Naive thymus-derived CD4-positive, alpha-beta T cell (primary cell): ENCODE measurements at regions of chr11 and their contacts with region 1.

Region 1: GRCh38 chr11:68297812-68298658 is 14.4 kb upstream of the LRP5 start:
- DNase-seq: peak; percentile 42 to 84 (median 70)
- ATAC-seq: peak; percentile 98
- H3K4me3 ChIP-seq: no peak overlapping the region
- H3K4me3 Mint-ChIP-seq: no peak overlapping the region
- H3K27ac ChIP-seq: no peak overlapping the region
- H3K27ac Mint-ChIP-seq: no peak overlapping the region
- H3K4me1 ChIP-seq: no peaks in the 10 kb centered on the region
- H3K4me1 Mint-ChIP-seq: peaks cover 0 to 7% (median 0%) of the 10 kb centered on the region in 7 donors
- H3K27me3 ChIP-seq: no peaks in the 10 kb centered on the region
- H3K27me3 Mint-ChIP-seq: peaks cover 0 to 5% (median 0%) of the 10 kb centered on the region in 5 donors

Region 2: DNA sequence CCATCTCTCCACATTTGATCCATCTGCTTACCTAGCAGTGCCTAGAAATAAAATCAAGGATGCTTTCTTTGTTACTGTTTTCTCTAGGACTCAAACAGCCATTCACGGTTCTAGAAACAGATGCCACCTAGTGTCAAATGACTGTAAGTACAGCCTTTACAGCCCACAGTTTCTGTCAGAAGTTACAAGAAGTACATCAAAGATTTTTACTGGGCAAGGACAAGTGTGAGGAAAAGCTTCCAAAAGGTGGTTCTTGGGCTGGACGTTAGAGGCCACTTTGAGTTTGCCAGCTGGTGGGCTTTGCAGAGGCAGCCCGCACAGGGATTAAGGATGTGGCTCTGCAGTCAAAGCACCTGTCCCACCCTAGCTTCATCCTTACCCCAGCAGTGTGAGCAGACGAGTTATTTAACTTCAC is 91.8 kb before region 1 on chr11:
- CTCF ChIA-PET with region 1: interaction called, 3 read pairs
- POLR2A ChIA-PET with region 1: no interaction called
- intact Hi-C with region 1: loop called (anchors 1 to 5 kb)
- DNase-seq: peak in 7 of 9 donors; percentile 35 to 65 (median 55)
- ATAC-seq: peak; percentile 82
- H3K4me3 ChIP-seq: no peak overlapping the region
- H3K4me3 Mint-ChIP-seq: peak overlapping the region in 7 of 10 donors; percentile 5 to 60 (median 25)
- H3K27ac ChIP-seq: no peak overlapping the region
- H3K27ac Mint-ChIP-seq: peak overlapping the region in 5 of 9 donors; percentile 7 to 73 (median 43)
- H3K4me1 ChIP-seq: peaks cover 23 to 48% of the 10 kb centered on the region in 2 donors
- H3K4me1 Mint-ChIP-seq: peaks cover 38 to 91% (median 71%) of the 10 kb centered on the region in 7 donors
- H3K27me3 ChIP-seq: no peaks in the 10 kb centered on the region
- H3K27me3 Mint-ChIP-seq: no peaks in the 10 kb centered on the region

Region 3: DNA sequence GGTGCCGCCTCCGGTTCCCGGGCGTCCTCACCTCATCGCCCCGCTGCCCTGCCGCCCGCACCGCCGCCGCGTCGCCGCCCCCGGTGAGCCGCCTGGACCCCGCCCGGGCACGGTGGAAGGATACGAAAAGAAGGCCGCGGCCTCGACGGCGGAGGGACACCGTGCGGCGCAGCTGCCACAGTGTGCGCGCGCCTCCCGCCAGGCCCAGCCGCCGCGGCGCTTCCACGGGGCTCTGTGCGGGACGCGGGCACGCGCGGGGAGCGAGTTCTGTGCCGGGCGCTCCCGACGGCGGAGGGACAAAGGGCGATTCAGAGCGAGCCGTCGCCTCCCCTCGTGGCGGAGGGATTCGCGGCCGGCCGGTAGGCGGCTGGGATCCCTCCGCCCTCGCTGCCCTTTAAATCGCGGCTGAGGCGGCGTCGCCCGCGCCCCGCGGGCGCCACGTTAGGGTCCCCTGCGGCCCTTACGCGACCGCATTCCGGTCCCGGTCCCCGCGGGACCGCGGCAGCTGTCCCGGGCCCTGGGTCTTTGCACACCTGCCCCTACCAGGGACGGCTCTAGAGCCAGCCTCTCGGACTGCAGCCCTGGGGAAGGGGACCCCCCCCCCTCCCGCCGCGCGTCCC is 84.4 kb before region 1 on chr11:
- CTCF ChIA-PET with region 1: no interaction called
- POLR2A ChIA-PET with region 1: interaction called, 3 read pairs
- intact Hi-C with region 1: loop called (anchors 1 to 5 kb)
- DNase-seq: peak; percentile 69 to 92 (median 86)
- ATAC-seq: peak; percentile 70
- H3K4me3 ChIP-seq: peak overlapping the region; percentile 81
- H3K4me3 Mint-ChIP-seq: peak overlapping the region; percentile 69 to 98 (median 78)
- H3K27ac ChIP-seq: peak overlapping the region; percentile 88
- H3K27ac Mint-ChIP-seq: peak overlapping the region in 7 of 9 donors; percentile 35 to 99 (median 92)
- H3K4me1 ChIP-seq: peaks cover 27% of the 10 kb centered on the region in 2 donors
- H3K4me1 Mint-ChIP-seq: peaks cover 35 to 50% (median 45%) of the 10 kb centered on the region in 7 donors
- H3K27me3 ChIP-seq: no peaks in the 10 kb centered on the region
- H3K27me3 Mint-ChIP-seq: peaks cover 0 to 28% (median 0%) of the 10 kb centered on the region in 5 donors

Region 4: DNA sequence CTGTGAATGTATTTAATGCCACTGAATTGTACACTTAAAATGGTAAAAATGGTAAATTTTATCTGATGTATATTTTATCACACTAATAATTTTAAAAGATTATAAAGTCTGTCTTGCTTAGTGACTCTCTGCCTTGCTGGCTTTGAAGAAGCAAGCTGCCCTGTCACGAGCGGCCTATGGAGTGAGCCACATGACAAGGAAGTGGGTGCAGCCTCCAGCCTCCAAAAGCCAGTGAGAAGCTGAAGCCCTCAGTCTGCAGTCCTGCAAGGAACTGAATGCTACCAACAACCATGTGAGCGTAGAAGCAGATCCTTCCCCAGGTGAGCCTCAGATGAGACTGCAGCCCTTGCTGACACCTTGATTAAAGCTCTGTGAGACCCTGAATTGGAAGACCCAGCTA is 46.3 kb before region 1 on chr11:
- CTCF ChIA-PET with region 1: interaction called, 131 read pairs
- POLR2A ChIA-PET with region 1: interaction called, 11 read pairs
- intact Hi-C with region 1: no loop called
- DNase-seq: no peak
- ATAC-seq: no peak
- H3K4me3 ChIP-seq: no peak overlapping the region
- H3K4me3 Mint-ChIP-seq: no peak overlapping the region
- H3K27ac ChIP-seq: no peak overlapping the region
- H3K27ac Mint-ChIP-seq: no peak overlapping the region
- H3K4me1 ChIP-seq: no peaks in the 10 kb centered on the region
- H3K4me1 Mint-ChIP-seq: peaks cover 0 to 3% (median 0%) of the 10 kb centered on the region in 7 donors
- H3K27me3 ChIP-seq: no peaks in the 10 kb centered on the region
- H3K27me3 Mint-ChIP-seq: peaks cover 0 to 4% (median 0%) of the 10 kb centered on the region in 5 donors

Region 5: GRCh38 chr11:68257475-68258362 is 40.3 kb before region 1 on chr11:
- CTCF ChIA-PET with region 1: interaction called, 131 read pairs
- POLR2A ChIA-PET with region 1: interaction called, 11 read pairs
- intact Hi-C with region 1: loop called (anchors 1 kb)
- DNase-seq: peak; percentile 84 to 95 (median 89)
- ATAC-seq: peak; percentile 95
- H3K4me3 ChIP-seq: no peak overlapping the region
- H3K4me3 Mint-ChIP-seq: peak overlapping the region in 1 of 10 donors; percentile 34
- H3K27ac ChIP-seq: no peak overlapping the region
- H3K27ac Mint-ChIP-seq: peak overlapping the region in 3 of 9 donors; percentile 21 to 85 (median 54)
- H3K4me1 ChIP-seq: peaks cover 3 to 5% of the 10 kb centered on the region in 2 donors
- H3K4me1 Mint-ChIP-seq: peaks cover 2 to 6% (median 4%) of the 10 kb centered on the region in 7 donors
- H3K27me3 ChIP-seq: no peaks in the 10 kb centered on the region
- H3K27me3 Mint-ChIP-seq: peaks cover 0 to 2% (median 0%) of the 10 kb centered on the region in 5 donors

Region 6: GRCh38 chr11:68321293-68322041 is 23.4 kb after region 1 on chr11:
- CTCF ChIA-PET with region 1: no interaction called
- POLR2A ChIA-PET with region 1: no interaction called
- intact Hi-C with region 1: no loop called
- DNase-seq: no peak
- ATAC-seq: no peak
- H3K4me3 ChIP-seq: no peak overlapping the region
- H3K4me3 Mint-ChIP-seq: no peak overlapping the region
- H3K27ac ChIP-seq: no peak overlapping the region
- H3K27ac Mint-ChIP-seq: no peak overlapping the region
- H3K4me1 ChIP-seq: peaks cover 0 to 1% of the 10 kb centered on the region in 2 donors
- H3K4me1 Mint-ChIP-seq: peaks cover 0 to 6% (median 0%) of the 10 kb centered on the region in 7 donors
- H3K27me3 ChIP-seq: no peaks in the 10 kb centered on the region
- H3K27me3 Mint-ChIP-seq: peaks cover 0 to 17% (median 0%) of the 10 kb centered on the region in 5 donors

Region 7: GRCh38 chr11:68383976-68384501 is 86.0 kb after region 1 on chr11:
- CTCF ChIA-PET with region 1: interaction called, 3 read pairs
- POLR2A ChIA-PET with region 1: no interaction called
- intact Hi-C with region 1: loop called in 1 of 2 experiments (anchors 1 kb)
- DNase-seq: peak; percentile 16 to 74 (median 53)
- ATAC-seq: peak; percentile 59
- H3K4me3 ChIP-seq: no peak overlapping the region
- H3K4me3 Mint-ChIP-seq: no peak overlapping the region
- H3K27ac ChIP-seq: no peak overlapping the region
- H3K27ac Mint-ChIP-seq: peak overlapping the region in 1 of 9 donors; percentile 29
- H3K4me1 ChIP-seq: no peaks in the 10 kb centered on the region
- H3K4me1 Mint-ChIP-seq: peaks cover 0 to 42% (median 12%) of the 10 kb centered on the region in 7 donors
- H3K27me3 ChIP-seq: no peaks in the 10 kb centered on the region
- H3K27me3 Mint-ChIP-seq: peaks cover 0 to 13% (median 6%) of the 10 kb centered on the region in 5 donors

Region 8: DNA sequence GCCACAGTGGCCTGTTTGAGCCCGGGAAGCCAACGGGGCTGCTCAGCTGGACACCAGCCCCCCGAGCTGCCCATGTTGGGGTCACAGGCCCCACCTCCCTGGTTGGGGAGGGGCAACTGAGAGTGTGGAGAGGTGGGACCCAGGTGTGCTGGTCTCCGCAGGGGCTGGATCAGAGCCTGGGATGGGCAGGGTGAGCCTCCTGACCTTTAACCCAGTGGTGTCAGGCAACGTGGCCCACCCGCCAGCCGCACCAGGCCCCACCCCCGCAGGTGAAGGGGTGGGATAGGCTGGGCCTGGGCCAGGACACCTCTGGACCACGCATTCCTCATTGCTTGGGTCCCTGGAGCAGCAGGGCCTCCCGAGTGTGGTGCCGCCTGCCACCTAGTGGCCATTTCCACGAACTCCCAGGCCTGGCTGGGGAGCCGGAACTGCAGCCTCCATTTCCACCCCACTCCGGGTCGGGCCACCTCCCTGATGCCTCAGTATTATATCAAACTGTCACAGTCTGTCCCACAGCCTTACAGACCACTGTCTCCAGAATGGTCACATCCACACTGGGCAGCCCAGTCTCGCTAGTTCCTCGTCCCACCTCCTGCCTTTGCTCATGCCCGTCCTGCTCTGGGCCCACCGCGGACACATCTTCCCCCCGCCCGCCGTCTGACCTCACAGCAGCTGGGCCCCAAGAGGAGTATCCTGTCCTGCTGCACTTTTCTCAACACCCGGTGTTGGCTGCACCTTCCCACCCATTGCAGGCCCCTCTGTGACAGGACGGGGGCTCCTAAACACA is 149.2 kb after region 1 on chr11:
- CTCF ChIA-PET with region 1: no interaction called
- POLR2A ChIA-PET with region 1: no interaction called
- intact Hi-C with region 1: loop called (anchors 1 to 2 kb)
- DNase-seq: peak; percentile 55 to 79 (median 69)
- ATAC-seq: peak; percentile 97
- H3K4me3 ChIP-seq: no peak overlapping the region
- H3K4me3 Mint-ChIP-seq: no peak overlapping the region
- H3K27ac ChIP-seq: no peak overlapping the region
- H3K27ac Mint-ChIP-seq: peak overlapping the region in 2 of 9 donors; percentile 21 to 22
- H3K4me1 ChIP-seq: peaks cover 0 to 3% of the 10 kb centered on the region in 2 donors
- H3K4me1 Mint-ChIP-seq: peaks cover 0 to 7% (median 4%) of the 10 kb centered on the region in 7 donors
- H3K27me3 ChIP-seq: no peaks in the 10 kb centered on the region
- H3K27me3 Mint-ChIP-seq: no peaks in the 10 kb centered on the region